Mammary epithelial cell (primary cell): ENCODE measurements at regions of chr16 and their contacts with region 1.

Region 1: GRCh38 chr16:30609926-30610839 is at the start of gene ZNF689:
- DNase-seq: peak; percentile 95
- H3K4me3 ChIP-seq: peak within 1 kb of the TSS; percentile 86 to 92 (median 92)
- H3K27ac ChIP-seq: peak within 1 kb of the TSS; percentile 84
- H3K4me1 ChIP-seq: peaks cover 10% of the 10 kb centered on the region
- H3K27me3 ChIP-seq: no peaks in the 10 kb centered on the region
- CTCF ChIP-seq: peak in 1 of 2 donors; percentile 14
- total RNA-seq, gene ZNF689: 6.7 to 7.0 TPM

Region 2: DNA sequence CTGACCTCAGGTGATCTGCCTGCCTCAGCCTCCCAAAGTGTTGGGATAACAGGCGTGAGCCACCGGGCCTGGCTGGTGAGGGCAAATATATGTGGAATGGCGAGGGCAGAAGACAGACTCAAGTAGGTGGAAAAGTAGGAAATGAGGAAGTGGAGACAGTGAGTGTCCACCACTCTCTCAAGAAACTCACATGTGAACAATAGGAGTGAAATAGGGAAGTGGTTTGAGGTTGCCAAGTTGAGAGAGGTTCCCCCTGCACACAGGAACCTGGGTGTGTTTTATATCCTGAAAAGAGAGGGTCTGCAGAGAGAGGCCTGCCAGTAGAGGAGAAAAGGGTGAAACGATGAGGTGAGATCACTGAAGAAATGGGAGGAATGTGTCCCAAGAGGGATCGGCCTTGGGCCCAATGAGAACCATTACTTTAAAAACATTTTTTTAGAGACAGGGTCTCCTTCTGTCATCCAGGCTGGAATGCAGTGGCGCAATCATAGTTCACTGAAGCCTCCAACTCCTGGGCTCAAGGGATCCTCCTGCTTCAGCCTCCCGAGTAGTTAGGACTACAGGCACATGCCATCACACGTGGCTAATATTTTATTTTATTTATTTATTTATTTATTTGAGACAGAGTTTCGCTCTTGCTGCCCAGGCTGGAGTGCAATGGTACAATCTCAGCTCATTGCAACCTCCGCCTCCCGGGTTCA is 443.8 kb before region 1 on chr16:
- CTCF ChIA-PET with region 1: no interaction called
- dilution Hi-C with region 1: no loop called
- in situ Hi-C with region 1: loop called in 1 of 2 experiments (anchors 25 kb)
- intact Hi-C with region 1: no loop called
- DNase-seq: no peak
- H3K4me3 ChIP-seq: no peak overlapping the region
- H3K27ac ChIP-seq: no peak overlapping the region
- H3K4me1 ChIP-seq: no peaks in the 10 kb centered on the region
- H3K27me3 ChIP-seq: no peaks in the 10 kb centered on the region
- CTCF ChIP-seq: no peak

Region 3: GRCh38 chr16:30417529-30418349 is 192.4 kb before region 1 on chr16:
- CTCF ChIA-PET with region 1: interaction called, 4 read pairs
- dilution Hi-C with region 1: loop called (anchors 10 kb)
- in situ Hi-C with region 1: no loop called
- intact Hi-C with region 1: no loop called
- DNase-seq: peak; percentile 92
- H3K4me3 ChIP-seq: peak overlapping the region in 2 of 3 experiments; percentile 50 to 62
- H3K27ac ChIP-seq: no peak overlapping the region
- H3K4me1 ChIP-seq: peaks cover 13% of the 10 kb centered on the region
- H3K27me3 ChIP-seq: no peaks in the 10 kb centered on the region
- CTCF ChIP-seq: peak in 1 of 2 donors; percentile 22